HCT116 (cell line): ENCODE measurements at regions of chr5 and their contacts with region 1.

Region 1: DNA sequence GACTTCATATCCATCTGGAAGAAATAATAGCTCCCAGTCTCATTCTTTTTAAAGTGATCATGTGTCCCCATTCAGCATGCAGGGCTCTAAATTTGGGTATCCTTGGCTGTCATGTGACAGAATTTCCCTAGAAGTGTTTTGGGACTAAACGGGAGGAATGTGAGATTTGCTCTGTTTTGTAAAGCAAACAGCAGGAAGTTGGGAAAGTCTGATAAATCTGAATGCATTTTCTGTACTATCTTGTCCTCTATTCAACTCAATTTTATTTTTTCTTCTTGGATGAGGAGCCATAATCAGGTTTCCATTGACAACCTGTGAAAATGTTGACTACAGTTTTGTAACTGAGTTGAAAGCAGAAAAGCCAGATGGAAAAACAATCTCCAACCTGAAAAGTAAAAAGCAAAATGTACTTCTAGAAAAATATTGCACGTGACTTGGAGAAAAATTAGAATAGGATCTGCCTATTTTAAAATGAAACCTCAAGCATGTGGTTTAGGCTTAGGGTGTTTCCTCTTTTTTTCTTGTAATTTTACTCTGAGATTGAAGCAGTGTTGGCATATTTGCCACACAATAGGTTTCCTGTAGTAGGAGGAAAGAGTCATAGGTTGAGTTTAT is 76.2 kb upstream of the IL6ST start:
- DNase-seq: no peak
- ATAC-seq: no peak
- H3K4me3 ChIP-seq: no peak overlapping the region
- H3K27ac ChIP-seq: no peak overlapping the region
- H3K4me1 ChIP-seq: no peaks in the 10 kb centered on the region
- H3K27me3 ChIP-seq: no peaks in the 10 kb centered on the region
- CTCF ChIP-seq: no peak
- POLR2A ChIP-seq: no peak
- RAD21 ChIP-seq: no peak

Region 2: GRCh38 chr5:55994574-55995333 is 76.2 kb before region 1 on chr5 and contains the start of gene IL6ST:
- CTCF ChIA-PET with region 1: interaction called, 4 read pairs
- POLR2A ChIA-PET with region 1: no interaction called
- RAD21 ChIA-PET with region 1: no interaction called
- intact Hi-C with region 1: loop called (anchors 5 kb)
- DNase-seq: peak; percentile 88
- ATAC-seq: peak; percentile 96
- H3K4me3 ChIP-seq: peak within 1 kb of the TSS; percentile 79 to 80
- H3K27ac ChIP-seq: peak within 1 kb of the TSS; percentile 89
- H3K4me1 ChIP-seq: peaks cover 5 to 31% of the 10 kb centered on the region in 2 experiments
- H3K27me3 ChIP-seq: no peaks in the 10 kb centered on the region
- CTCF ChIP-seq: no peak
- POLR2A ChIP-seq: peak; percentile 64
- RAD21 ChIP-seq: no peak
- total RNA-seq, gene IL6ST: 26.5 TPM

Region 3: GRCh38 chr5:56123531-56124243 is 52.7 kb after region 1 on chr5:
- CTCF ChIA-PET with region 1: no interaction called
- POLR2A ChIA-PET with region 1: no interaction called
- RAD21 ChIA-PET with region 1: interaction called in 1 of 2 experiments, 11 read pairs
- intact Hi-C with region 1: no loop called
- DNase-seq: peak; percentile 91
- ATAC-seq: peak; percentile 93
- H3K4me3 ChIP-seq: peak overlapping the region in 1 of 2 experiments; percentile 31; a peak in 3 of 4 replicates
- H3K27ac ChIP-seq: peak overlapping the region; percentile 2; the same call in 1 of the 2 replicates
- H3K4me1 ChIP-seq: peaks cover 11 to 18% of the 10 kb centered on the region in 2 experiments; a peak in 3 of 4 replicates
- H3K27me3 ChIP-seq: no peaks in the 10 kb centered on the region
- CTCF ChIP-seq: no peak
- POLR2A ChIP-seq: no peak
- RAD21 ChIP-seq: no peak

Region 4: DNA sequence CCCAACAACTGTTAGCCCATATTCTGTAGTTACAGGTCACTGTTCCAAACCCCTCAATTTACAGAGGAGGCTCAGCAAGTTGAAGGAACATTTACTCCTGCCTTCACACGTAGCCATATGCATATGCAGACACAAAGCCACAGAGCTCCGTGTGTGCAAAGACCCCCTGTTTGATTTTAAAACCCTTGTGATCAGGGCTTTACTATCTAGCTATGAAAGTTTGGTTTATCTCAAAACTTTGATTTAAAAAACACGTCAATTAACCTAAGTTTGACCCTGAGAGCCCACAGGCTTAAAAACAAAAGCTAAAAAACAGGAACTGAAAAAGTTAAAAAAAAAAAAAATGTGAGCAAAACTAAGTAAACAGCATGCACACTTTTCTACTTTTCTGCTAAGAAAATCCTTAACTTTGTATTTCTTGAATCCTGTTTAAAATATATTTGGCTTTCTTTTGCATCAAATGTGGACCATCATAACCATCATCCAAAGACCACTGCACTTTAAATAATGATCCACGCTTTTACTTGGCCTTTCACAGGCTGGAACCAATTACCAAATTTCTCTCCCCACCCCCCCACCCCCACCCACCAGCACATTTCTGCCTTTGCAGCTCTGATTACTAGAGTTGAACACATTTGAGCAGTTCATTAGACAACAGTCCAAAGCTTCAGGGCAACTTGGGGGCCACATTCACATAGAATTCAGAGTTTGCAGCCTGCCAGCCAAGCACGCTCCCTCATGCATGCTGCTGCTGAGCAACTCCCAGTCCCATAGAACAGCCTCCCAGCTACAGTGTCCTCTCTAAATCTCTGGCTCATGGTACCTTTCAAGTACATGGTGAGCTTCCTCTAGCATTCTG is 615.6 kb after region 1 on chr5:
- CTCF ChIA-PET with region 1: no interaction called
- POLR2A ChIA-PET with region 1: no interaction called
- RAD21 ChIA-PET with region 1: no interaction called
- intact Hi-C with region 1: no loop called
- DNase-seq: no peak
- ATAC-seq: no peak
- H3K4me3 ChIP-seq: no peak overlapping the region
- H3K27ac ChIP-seq: no peak overlapping the region
- H3K4me1 ChIP-seq: no peaks in the 10 kb centered on the region
- H3K27me3 ChIP-seq: no peaks in the 10 kb centered on the region
- CTCF ChIP-seq: no peak
- POLR2A ChIP-seq: no peak
- RAD21 ChIP-seq: no peak